Right cardiac atrium (tissue), 5 donors: ENCODE measurements at regions of chr12 and their contacts with region 1.

Region 1: DNA sequence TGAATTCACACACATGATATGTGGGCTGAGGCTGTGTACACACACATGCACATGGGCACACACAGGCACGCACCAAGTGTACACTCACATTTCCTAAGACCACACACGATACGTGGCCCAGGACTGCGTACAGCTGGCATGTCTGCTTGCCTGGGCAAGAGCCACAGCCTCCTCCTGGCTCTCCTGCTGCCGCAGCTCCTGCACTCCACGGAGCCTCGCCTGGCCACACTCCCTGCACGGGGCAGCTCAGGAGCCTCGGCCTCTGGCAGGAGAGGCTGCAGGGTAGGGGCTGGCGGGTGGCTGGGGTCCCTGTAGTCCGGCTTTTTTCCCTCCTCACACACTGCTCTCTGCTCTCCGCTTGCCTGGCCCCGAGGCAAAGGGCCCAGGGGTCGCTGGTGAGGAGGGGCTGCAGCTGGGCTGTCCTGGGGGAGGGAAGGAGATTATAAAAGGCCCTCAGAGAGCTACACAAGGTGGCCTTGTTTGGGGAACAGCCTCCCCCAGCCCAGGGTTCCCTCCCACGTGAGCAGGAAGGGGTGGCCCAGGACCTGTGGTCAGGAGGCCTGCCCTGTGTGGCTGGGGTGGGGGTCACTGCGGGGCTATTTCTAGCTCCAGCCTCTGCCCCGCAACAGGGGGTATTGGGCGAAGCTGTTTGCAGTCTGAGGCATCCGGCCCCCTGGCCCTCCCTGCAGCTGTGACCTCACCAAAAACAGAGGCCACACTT is 89.0 kb upstream of the SFSWAP start:
- DNase-seq: no peak
- ATAC-seq: peak in 1 of 2 donors; percentile 22
- H3K4me3 ChIP-seq: no peak overlapping the region
- H3K27ac ChIP-seq: no peak overlapping the region
- H3K4me1 ChIP-seq: no peaks in the 10 kb centered on the region
- H3K27me3 ChIP-seq: no peaks in the 10 kb centered on the region

Region 2: DNA sequence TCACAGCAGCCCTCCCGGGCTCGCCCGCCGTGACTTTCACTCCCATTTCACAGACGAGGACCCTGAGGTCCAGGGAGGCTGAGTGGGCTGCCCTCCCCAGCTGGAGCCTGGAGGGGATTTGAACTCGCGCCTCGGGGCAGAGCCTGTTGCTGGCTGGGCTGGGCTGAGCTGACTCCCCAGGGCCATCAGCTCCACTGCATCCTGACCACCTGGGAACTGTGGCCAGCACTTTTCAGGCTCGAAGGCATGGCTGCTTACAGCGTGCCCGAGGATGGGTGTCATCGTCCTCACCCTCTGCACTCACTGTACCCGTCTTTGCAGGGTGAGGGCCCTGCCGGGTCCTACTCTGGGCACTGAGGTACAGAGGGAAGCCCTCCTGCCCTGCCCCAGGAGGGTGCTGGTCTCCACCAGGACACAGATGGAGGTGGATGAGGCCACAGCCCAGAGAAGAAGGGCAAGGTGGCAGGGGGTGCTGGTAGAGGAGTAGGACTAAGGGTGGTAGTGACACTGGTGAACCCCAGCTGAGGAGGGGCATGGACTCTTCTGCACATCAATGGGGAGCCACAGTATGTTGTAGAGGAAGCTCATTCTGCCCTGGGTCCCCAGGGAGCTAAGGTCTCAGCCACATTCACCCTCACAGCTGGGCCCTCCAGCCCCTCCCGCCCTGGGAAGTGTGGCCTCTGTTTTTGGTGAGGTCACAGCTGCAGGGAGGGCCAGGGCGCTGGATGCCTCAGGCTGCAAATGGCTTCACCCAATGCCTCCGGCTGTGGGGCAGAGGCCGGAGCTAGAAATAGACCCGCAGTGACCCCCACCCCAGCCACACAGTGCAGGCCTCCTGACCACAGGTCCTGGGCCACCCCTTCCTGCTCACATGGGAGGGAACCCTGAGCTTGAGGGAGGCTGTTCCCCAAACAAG is 276.1 kb before region 1 on chr12:
- intact Hi-C with region 1: loop called in 2 of 4 experiments (anchors 2 to 5 kb)
- DNase-seq: no peak
- ATAC-seq: no peak
- H3K4me3 ChIP-seq: no peak overlapping the region
- H3K27ac ChIP-seq: no peak overlapping the region
- H3K4me1 ChIP-seq: no peaks in the 10 kb centered on the region
- H3K27me3 ChIP-seq: no peaks in the 10 kb centered on the region

Region 3: GRCh38 chr12:131869871-131870418 is 248.1 kb after region 1 on chr12:
- intact Hi-C with region 1: no loop called
- DNase-seq: no peak
- ATAC-seq: no peak
- H3K4me3 ChIP-seq: no peak overlapping the region
- H3K27ac ChIP-seq: no peak overlapping the region
- H3K4me1 ChIP-seq: no peaks in the 10 kb centered on the region
- H3K27me3 ChIP-seq: no peaks in the 10 kb centered on the region

Region 4: DNA sequence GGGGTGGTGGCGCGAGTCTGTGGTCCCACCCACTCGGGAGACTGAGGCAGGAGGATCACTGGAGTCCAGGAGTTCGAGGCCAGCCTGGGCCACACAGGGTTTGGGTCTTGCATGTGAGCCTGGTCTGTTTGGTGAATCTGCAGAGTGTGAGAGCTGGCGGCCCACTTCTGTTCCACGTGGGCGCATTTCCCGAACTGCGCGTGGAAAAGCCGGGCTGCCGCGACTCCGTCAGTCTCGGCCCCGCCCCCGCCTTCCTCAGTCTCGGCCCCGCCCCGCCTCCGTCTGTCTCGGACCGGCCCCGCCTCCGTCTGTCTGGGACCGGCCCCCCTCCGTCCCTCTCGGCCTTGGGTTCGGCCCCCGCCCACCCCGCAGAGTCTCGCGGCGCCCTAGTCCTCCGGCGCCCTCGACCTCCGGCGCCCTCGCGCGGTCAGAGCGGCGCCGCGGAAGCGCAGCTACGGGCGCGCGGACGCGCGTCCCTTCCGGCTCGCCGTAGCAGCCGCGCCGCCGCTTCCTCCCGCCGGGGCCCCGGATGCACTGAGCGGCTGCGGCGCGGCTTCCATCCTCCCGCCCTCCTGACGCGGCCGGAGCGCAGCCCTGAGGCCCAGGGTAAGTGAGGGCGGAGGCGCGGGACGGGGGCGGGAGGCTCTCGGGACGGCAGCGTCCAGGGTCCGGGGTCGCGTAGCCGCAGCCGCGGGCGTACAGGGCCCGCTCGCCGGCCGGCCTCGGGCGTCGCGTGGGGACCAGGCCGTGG is 327.7 kb after region 1 on chr12 and contains the start of gene EP400:
- intact Hi-C with region 1: no loop called
- DNase-seq: peak; percentile 97 to 99 (median 99)
- ATAC-seq: peak; percentile 98 to 99
- H3K4me3 ChIP-seq: peak within 1 kb of the TSS; percentile 95
- H3K27ac ChIP-seq: peak within 1 kb of the TSS; percentile 72
- H3K4me1 ChIP-seq: peaks cover 4% of the 10 kb centered on the region
- H3K27me3 ChIP-seq: no peaks in the 10 kb centered on the region
- total RNA-seq, gene EP400: 15.5 to 21.6 (median 18.1) TPM

Region 5: DNA sequence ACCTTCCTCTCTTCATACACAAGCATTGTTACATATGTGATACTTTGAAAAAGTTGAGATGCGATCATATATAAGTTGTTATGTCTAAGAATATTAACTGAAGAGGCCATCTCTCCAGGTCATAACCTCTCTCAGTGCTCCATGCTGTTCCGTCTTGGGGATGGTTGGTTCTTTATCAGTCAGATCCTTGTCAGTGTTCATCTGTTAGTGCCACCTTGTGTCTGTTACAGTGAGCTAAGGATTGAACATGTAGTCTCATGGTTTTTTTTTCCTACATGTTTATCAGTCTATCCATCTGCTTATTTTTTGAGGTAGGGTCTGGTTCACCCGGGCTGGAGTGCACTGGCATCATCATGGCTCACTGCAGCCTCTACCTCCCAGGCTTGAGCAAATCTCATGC is 358.4 kb after region 1 on chr12:
- intact Hi-C with region 1: loop called in 1 of 4 experiments (anchors 10 kb)
- DNase-seq: no peak
- ATAC-seq: no peak
- H3K4me3 ChIP-seq: no peak overlapping the region
- H3K27ac ChIP-seq: no peak overlapping the region
- H3K4me1 ChIP-seq: peaks cover 1% of the 10 kb centered on the region
- H3K27me3 ChIP-seq: no peaks in the 10 kb centered on the region